ENCODE measurements at regions of chr4 and their contacts with region 1.

Region 1: GRCh38 chr4:177339477-177340374 is 30.1 kb downstream of the NEIL3 start:
- DNase-seq: peak; percentile 15
- H3K4me3 Mint-ChIP-seq: no peak overlapping the region
- H3K27ac Mint-ChIP-seq: peak overlapping the region; percentile 74
- H3K4me1 Mint-ChIP-seq: peaks cover 14% of the 10 kb centered on the region
- H3K27me3 Mint-ChIP-seq: no peaks in the 10 kb centered on the region

Region 2: GRCh38 chr4:177250056-177250696 is 89.5 kb before region 1 on chr4:
- CTCF ChIA-PET with region 1: interaction called, 12 read pairs
- POLR2A ChIA-PET with region 1: no interaction called
- DNase-seq: peak; percentile 72
- H3K4me3 Mint-ChIP-seq: no peak overlapping the region
- H3K27ac Mint-ChIP-seq: no peak overlapping the region
- H3K4me1 Mint-ChIP-seq: peaks cover 11% of the 10 kb centered on the region
- H3K27me3 Mint-ChIP-seq: peaks cover 12% of the 10 kb centered on the region